ENCODE measurements at regions of chr15 and their contacts with region 1.

Region 1: DNA sequence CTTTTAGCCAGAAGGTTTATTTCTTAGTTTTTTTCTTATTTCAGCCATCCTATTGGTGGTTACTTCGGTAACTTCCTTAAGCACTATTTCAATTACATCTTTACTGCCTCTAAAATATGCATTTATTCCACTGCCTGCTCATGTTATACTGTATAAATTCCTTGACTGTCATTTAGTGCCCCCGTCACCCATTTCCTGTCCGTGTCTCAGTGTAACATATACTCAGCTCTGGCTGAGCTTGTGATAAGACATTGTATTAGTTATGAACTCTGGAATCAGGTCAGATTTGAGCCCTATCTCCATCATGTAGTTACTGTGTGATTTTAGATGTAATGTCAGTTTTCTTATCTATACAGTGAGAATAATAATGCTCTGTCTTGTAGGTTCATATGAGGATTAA is 24.2 kb downstream of the PIAS1 start:
- DNase-seq: no peak
- ATAC-seq: no peak
- H3K4me3 ChIP-seq: no peak overlapping the region
- H3K4me3 Mint-ChIP-seq: no peak overlapping the region
- H3K27ac ChIP-seq: no peak overlapping the region
- H3K27ac Mint-ChIP-seq: no peak overlapping the region
- H3K4me1 ChIP-seq: peaks cover 72% of the 10 kb centered on the region
- H3K4me1 Mint-ChIP-seq: peaks cover 83% of the 10 kb centered on the region
- H3K27me3 ChIP-seq: no peaks in the 10 kb centered on the region
- H3K27me3 Mint-ChIP-seq: no peaks in the 10 kb centered on the region
- CTCF ChIP-seq: no peak

Region 2: GRCh38 chr15:68042156-68042854 is 36.1 kb before region 1 on chr15:
- CTCF ChIA-PET with region 1: no interaction called
- POLR2A ChIA-PET with region 1: no interaction called
- intact Hi-C with region 1: no loop called
- DNase-seq: no peak
- ATAC-seq: no peak
- H3K4me3 ChIP-seq: no peak overlapping the region
- H3K4me3 Mint-ChIP-seq: no peak overlapping the region
- H3K27ac ChIP-seq: no peak overlapping the region
- H3K27ac Mint-ChIP-seq: no peak overlapping the region
- H3K4me1 ChIP-seq: no peaks in the 10 kb centered on the region
- H3K4me1 Mint-ChIP-seq: no peaks in the 10 kb centered on the region
- H3K27me3 ChIP-seq: no peaks in the 10 kb centered on the region
- H3K27me3 Mint-ChIP-seq: peaks cover 9% of the 10 kb centered on the region
- CTCF ChIP-seq: no peak

Region 3: DNA sequence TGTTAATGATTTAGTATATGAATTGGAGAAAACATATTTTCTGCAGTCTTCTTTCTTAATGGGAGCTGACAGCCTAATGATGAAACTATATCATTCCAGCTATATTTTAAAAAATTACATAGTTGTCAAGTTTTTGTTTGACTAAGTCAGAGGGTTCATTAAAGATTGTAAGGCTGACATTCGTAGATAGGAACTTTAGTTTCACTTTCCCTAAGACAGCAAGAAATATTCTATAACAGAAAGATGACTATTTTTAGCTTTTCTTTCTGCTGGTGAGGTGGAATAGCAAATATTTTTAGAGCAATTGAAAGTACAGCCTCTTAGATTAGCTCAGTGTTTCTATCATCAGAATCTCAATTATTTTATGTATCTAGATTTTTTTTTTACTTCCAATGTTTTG is 36.0 kb after region 1 on chr15:
- CTCF ChIA-PET with region 1: no interaction called
- POLR2A ChIA-PET with region 1: interaction called, 4 read pairs
- intact Hi-C with region 1: loop called in 1 of 2 experiments (anchors 5 kb)
- DNase-seq: peak in 2 of 9 experiments; percentile 7 to 32
- ATAC-seq: peak; percentile 31
- H3K4me3 ChIP-seq: peak overlapping the region; percentile 4 to 16
- H3K4me3 Mint-ChIP-seq: peak overlapping the region; percentile 68
- H3K27ac ChIP-seq: peak overlapping the region in 1 of 2 experiments; percentile 60
- H3K27ac Mint-ChIP-seq: peak overlapping the region; percentile 28
- H3K4me1 ChIP-seq: peaks cover 36% of the 10 kb centered on the region
- H3K4me1 Mint-ChIP-seq: peaks cover 76% of the 10 kb centered on the region
- H3K27me3 ChIP-seq: no peaks in the 10 kb centered on the region
- H3K27me3 Mint-ChIP-seq: no peaks in the 10 kb centered on the region
- CTCF ChIP-seq: no peak